A673 (cell line): ENCODE measurements at regions of chr2 and their contacts with region 1.

Region 1: GRCh38 chr2:65432227-65433190 is at the start of gene SPRED2:
- DNase-seq: peak; percentile 99
- H3K4me3 ChIP-seq: peak within 1 kb of the TSS; percentile 97
- H3K27ac ChIP-seq: peak within 1 kb of the TSS; percentile 96
- H3K4me1 ChIP-seq: peaks cover 20% of the 10 kb centered on the region
- H3K27me3 ChIP-seq: no peaks in the 10 kb centered on the region
- CTCF ChIP-seq: no peak
- total RNA-seq, gene SPRED2: 79.4 and 81.0 TPM in 2 replicates

Region 2: GRCh38 chr2:65350684-65351083 is 81.8 kb before region 1 on chr2:
- CTCF ChIA-PET with region 1: no interaction called
- POLR2A ChIA-PET with region 1: no interaction called
- intact Hi-C with region 1: loop called (anchors 5 kb)
- DNase-seq: peak; percentile 60
- H3K4me3 ChIP-seq: peak overlapping the region; percentile 8
- H3K27ac ChIP-seq: peak overlapping the region; percentile 59
- H3K4me1 ChIP-seq: peaks cover 55% of the 10 kb centered on the region
- H3K27me3 ChIP-seq: no peaks in the 10 kb centered on the region
- CTCF ChIP-seq: peak; percentile 45; the same call in 1 of the 2 replicates

Region 3: GRCh38 chr2:65554765-65555591 is 122.5 kb after region 1 on chr2:
- CTCF ChIA-PET with region 1: no interaction called
- POLR2A ChIA-PET with region 1: no interaction called
- intact Hi-C with region 1: loop called (anchors 5 kb)
- DNase-seq: no peak
- H3K4me3 ChIP-seq: no peak overlapping the region
- H3K27ac ChIP-seq: no peak overlapping the region
- H3K4me1 ChIP-seq: no peaks in the 10 kb centered on the region
- H3K27me3 ChIP-seq: no peaks in the 10 kb centered on the region
- CTCF ChIP-seq: no peak

Region 4: DNA sequence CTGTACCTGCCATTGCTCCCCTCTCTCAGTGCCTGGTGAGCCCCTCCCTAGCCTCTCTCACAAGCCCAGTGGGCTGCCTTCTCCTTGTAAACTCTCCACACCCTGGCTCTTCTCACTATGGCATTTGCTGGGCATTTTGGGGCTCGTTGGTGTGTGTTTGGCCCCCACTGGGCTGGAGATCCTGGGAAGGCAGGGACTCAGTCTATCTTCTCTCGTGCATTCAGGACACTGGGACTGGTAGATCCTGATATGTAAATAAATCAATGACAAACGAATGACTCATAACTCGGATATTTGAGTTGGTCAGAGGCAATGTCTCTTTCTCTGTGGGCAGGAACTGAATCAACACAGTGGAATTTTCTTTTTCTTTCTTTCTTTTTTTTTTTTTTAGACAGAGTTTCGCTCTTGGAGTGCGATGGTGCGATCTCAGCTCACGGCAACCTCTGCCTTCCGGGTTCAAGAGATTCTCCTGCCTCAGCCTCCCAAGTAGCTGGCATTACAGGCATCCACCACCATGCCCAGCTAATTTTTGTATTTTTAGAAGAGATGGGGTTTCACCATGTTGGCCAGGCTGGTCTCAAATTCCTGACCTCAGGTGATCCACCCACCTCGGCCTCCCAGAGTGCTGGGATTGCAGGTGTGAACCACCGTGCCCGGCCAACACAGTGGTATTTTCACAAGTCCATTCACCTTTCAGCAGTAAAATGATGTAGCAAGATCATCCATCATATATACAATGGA is 144.5 kb after region 1 on chr2:
- CTCF ChIA-PET with region 1: no interaction called
- POLR2A ChIA-PET with region 1: no interaction called
- intact Hi-C with region 1: no loop called
- DNase-seq: peak; percentile 86
- H3K4me3 ChIP-seq: no peak overlapping the region
- H3K27ac ChIP-seq: peak overlapping the region; percentile 39
- H3K4me1 ChIP-seq: peaks cover 16% of the 10 kb centered on the region
- H3K27me3 ChIP-seq: no peaks in the 10 kb centered on the region
- CTCF ChIP-seq: no peak

Region 5: GRCh38 chr2:65666156-65666725 is 233.7 kb after region 1 on chr2:
- CTCF ChIA-PET with region 1: no interaction called
- POLR2A ChIA-PET with region 1: no interaction called
- intact Hi-C with region 1: no loop called
- DNase-seq: peak; percentile 64
- H3K4me3 ChIP-seq: no peak overlapping the region
- H3K27ac ChIP-seq: no peak overlapping the region
- H3K4me1 ChIP-seq: peaks cover 38% of the 10 kb centered on the region
- H3K27me3 ChIP-seq: no peaks in the 10 kb centered on the region
- CTCF ChIP-seq: no peak